ENCODE measurements at regions of chr19 and their contacts with region 1.

Region 1: GRCh38 chr19:35204799-35205732 is 23.5 kb downstream of the FAM187B start:
- DNase-seq: peak; percentile 87
- ATAC-seq: peak; percentile 92
- H3K4me3 ChIP-seq: peak overlapping the region; percentile 27; the same call in 1 of the 2 replicates
- H3K27ac ChIP-seq: peak overlapping the region; percentile 83
- H3K4me1 ChIP-seq: peaks cover 33% of the 10 kb centered on the region
- H3K27me3 ChIP-seq: no peaks in the 10 kb centered on the region; a peak in 1 of 4 replicates
- CTCF ChIP-seq: no peak
- EP300 ChIP-seq: peak; percentile 57 to 99; a peak in 3 of 4 replicates
- POLR2A ChIP-seq: no peak
- RAD21 ChIP-seq: no peak; the same call in 1 of the 2 replicates

Region 2: DNA sequence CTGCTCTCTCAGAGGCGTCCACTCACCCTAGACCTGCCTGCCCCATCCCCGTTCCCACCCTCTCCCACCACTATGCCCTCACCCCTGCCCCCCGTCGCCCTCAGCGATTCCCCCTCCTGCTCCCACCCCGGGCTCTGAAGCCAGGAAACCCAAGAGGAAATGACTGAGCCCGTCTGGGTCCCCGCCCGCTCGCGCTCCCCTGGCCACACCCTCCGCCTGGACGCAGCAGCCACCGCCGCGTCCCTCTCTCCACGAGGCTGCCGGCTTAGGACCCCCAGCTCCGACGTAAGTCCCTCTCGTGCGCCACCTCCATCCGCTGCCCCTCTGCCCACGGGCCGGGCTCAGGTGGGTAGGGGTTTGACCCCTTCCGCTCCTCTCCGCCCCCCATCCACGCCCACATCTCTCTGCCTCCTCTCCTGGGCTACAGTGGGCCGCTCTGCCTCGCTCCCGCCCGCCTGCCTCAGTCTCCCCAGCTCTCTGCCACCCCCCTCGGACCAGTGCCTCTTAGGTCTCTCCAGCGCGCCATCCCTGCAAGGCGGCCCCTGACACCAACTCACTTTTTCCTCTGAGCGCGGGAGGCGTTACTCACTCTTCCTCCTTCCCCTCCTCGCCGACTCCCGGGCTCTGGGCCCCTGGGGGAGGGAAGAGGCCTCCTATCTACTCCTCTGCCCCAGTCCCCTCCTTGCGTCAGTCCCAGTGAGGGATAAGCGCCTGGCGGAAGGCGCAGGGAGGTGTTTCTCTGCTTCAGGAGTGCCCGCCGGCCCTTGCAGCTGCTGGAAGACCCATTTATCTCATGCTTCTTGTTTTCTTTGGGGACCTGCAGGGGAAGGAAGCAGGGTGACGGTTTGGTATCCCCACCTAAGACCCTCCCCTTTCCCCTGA is 50.3 kb before region 1 on chr19 and contains the start of gene FXYD5:
- CTCF ChIA-PET with region 1: interaction called, 7 read pairs
- POLR2A ChIA-PET with region 1: interaction called, 6 read pairs
- RAD21 ChIA-PET with region 1: interaction called, 4 read pairs
- SMC1A ChIA-PET with region 1: interaction called, 8 read pairs
- in situ Hi-C with region 1: no loop called
- intact Hi-C with region 1: loop called (anchors 5 kb)
- DNase-seq: no peak
- ATAC-seq: peak; percentile 86
- H3K4me3 ChIP-seq: peak within 1 kb of the TSS; percentile 98
- H3K27ac ChIP-seq: peak within 1 kb of the TSS; percentile 34
- H3K4me1 ChIP-seq: peaks cover 6% of the 10 kb centered on the region
- H3K27me3 ChIP-seq: peaks cover 0 to 3% of the 10 kb centered on the region in 2 experiments; a peak in 1 of 4 replicates
- CTCF ChIP-seq: no peak
- EP300 ChIP-seq: no peak
- POLR2A ChIP-seq: peak; percentile 74
- RAD21 ChIP-seq: no peak
- polyA plus RNA-seq, gene FXYD5: 30.0 to 50.9 TPM

Region 3: DNA sequence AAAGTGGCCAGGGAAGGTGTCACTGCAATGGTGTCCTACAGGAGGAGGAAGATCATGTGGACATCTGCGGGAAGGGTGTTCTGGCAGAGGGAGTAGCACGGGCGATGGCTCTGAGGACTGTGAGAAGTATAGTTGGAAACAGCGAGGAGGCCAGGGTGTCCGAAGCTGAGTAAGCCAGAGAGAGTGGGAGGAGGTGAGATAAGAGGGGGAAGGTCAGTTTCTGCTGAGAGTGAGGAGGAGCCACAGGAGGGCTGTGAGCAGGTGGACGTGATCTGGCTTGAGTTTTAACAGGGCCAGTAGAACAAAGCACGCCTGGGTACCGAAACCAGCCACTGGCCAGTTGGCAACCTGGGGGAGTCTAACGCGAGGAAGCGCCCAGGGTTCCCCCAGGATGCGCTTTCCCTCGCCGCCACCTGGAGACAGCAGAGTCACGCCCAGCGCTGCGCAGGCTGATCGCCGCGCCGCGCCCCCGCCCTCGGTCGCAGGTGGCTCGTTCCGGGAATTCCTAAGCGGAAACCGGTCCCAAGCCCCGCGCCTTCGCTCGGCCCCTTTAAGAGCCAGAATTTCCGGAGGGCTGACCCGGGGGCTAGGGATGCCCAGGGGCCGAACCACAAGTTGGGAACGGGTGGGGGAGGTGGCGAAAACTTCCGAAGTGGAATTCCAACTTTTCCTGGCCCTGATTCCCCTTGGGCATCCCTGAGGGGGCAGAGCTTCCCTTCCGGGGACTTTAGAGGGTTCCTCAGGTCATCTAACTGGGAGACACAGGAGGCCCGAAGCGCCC is 42.6 kb after region 1 on chr19:
- CTCF ChIA-PET with region 1: no interaction called
- POLR2A ChIA-PET with region 1: no interaction called
- RAD21 ChIA-PET with region 1: no interaction called
- SMC1A ChIA-PET with region 1: no interaction called
- in situ Hi-C with region 1: no loop called
- intact Hi-C with region 1: loop called (anchors 1 kb)
- DNase-seq: peak; percentile 46
- ATAC-seq: peak; percentile 71
- H3K4me3 ChIP-seq: peak overlapping the region; percentile 90
- H3K27ac ChIP-seq: peak overlapping the region; percentile 95
- H3K4me1 ChIP-seq: peaks cover 4% of the 10 kb centered on the region; the same call in 1 of the 2 replicates
- H3K27me3 ChIP-seq: no peaks in the 10 kb centered on the region
- CTCF ChIP-seq: peak; percentile 69 to 86 (median 77); a peak in 4 of 6 replicates
- EP300 ChIP-seq: no peak
- POLR2A ChIP-seq: no peak
- RAD21 ChIP-seq: peak; percentile 61

Measured in GM12878 (cell line).